OCI-LY7 (cell line): ENCODE measurements at regions of chr17 and their contacts with region 1.

Region 1: GRCh38 chr17:82917691-82918345 is 78.0 kb upstream of the ZNF750 start:
- DNase-seq: peak; percentile 66
- H3K4me3 ChIP-seq: no peak overlapping the region
- H3K27ac ChIP-seq: no peak overlapping the region
- H3K4me1 ChIP-seq: peaks cover 51% of the 10 kb centered on the region
- CTCF ChIP-seq: peak; percentile 94

Region 2: GRCh38 chr17:82781894-82782274 is 135.9 kb before region 1 on chr17:
- CTCF ChIA-PET with region 1: interaction called, 11 read pairs
- POLR2A ChIA-PET with region 1: interaction called, 5 read pairs
- intact Hi-C with region 1: loop called (anchors 1 kb)
- DNase-seq: peak; percentile 92
- H3K4me3 ChIP-seq: no peak overlapping the region
- H3K27ac ChIP-seq: peak overlapping the region; percentile 36
- H3K4me1 ChIP-seq: peaks cover 21% of the 10 kb centered on the region
- CTCF ChIP-seq: peak; percentile 100

Region 3: GRCh38 chr17:82863941-82864774 is 53.7 kb before region 1 on chr17:
- CTCF ChIA-PET with region 1: interaction called, 4 read pairs
- POLR2A ChIA-PET with region 1: interaction called, 3 read pairs
- intact Hi-C with region 1: loop called (anchors 1 kb)
- DNase-seq: peak; percentile 75
- H3K4me3 ChIP-seq: peak overlapping the region; percentile 7
- H3K27ac ChIP-seq: peak overlapping the region; percentile 52
- H3K4me1 ChIP-seq: peaks cover 93% of the 10 kb centered on the region
- CTCF ChIP-seq: no peak

Region 4: DNA sequence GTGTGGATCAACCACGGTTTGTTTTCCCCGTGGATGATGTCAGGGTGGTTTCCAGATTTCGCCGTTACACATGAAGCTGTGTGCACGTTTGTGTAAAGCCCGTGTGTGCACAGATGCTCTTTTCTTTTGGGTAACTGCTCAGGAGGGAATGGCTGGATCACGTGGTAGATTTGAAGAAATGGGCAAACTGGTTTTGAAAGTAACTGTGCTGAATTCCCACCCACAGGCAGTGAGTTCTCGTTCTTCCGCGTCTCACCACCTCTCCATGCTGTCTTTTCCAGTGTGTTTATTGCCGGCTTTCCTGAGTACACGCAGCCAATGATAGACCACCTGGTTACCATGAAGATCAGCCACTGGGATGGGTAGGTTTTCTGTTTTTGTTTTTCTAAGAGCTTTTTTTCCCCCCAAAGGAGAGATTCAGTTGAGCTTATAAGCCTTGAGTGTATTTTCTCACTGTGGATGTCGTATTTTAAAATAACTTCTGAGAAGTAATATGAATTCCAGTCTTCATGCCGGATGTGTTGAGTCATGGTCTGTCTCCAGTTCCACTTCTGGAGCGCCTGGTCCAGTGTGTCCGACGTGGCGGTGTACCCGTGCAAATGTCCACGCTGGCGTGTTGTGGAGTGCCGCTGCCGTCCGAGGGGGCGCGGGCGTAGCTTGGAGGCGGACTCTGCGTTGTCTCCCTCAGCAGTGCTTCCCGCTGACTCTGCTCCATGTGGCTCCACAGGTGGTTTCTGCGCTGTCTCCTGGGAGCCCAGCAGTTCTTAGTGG is 17.3 kb before region 1 on chr17:
- CTCF ChIA-PET with region 1: no interaction called
- POLR2A ChIA-PET with region 1: no interaction called
- intact Hi-C with region 1: no loop called
- DNase-seq: no peak
- H3K4me3 ChIP-seq: no peak overlapping the region
- H3K27ac ChIP-seq: no peak overlapping the region
- H3K4me1 ChIP-seq: no peaks in the 10 kb centered on the region
- CTCF ChIP-seq: no peak

Region 5: DNA sequence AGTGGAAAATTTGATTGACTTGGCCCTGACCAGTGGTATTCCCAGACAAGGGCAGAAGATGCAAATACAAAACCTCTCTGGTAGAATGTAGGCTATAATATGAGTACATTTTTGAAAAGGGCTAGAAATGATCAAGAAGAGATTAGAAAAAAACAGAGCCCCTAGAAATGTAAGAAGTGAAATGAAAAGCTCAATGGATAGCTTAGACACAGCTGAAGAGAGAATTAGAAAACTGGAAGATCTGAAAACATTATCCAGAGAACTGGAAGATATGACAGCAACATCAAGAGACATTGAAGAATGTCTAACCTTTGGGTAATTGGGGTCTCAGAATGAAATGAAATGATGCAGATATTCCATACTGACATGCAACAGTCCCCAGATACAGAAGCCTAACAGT is 27.2 kb after region 1 on chr17:
- CTCF ChIA-PET with region 1: no interaction called
- POLR2A ChIA-PET with region 1: no interaction called
- intact Hi-C with region 1: loop called (anchors 1 kb)
- DNase-seq: peak; percentile 37
- H3K4me3 ChIP-seq: no peak overlapping the region
- H3K27ac ChIP-seq: no peak overlapping the region
- H3K4me1 ChIP-seq: no peaks in the 10 kb centered on the region
- CTCF ChIP-seq: no peak

Region 6: DNA sequence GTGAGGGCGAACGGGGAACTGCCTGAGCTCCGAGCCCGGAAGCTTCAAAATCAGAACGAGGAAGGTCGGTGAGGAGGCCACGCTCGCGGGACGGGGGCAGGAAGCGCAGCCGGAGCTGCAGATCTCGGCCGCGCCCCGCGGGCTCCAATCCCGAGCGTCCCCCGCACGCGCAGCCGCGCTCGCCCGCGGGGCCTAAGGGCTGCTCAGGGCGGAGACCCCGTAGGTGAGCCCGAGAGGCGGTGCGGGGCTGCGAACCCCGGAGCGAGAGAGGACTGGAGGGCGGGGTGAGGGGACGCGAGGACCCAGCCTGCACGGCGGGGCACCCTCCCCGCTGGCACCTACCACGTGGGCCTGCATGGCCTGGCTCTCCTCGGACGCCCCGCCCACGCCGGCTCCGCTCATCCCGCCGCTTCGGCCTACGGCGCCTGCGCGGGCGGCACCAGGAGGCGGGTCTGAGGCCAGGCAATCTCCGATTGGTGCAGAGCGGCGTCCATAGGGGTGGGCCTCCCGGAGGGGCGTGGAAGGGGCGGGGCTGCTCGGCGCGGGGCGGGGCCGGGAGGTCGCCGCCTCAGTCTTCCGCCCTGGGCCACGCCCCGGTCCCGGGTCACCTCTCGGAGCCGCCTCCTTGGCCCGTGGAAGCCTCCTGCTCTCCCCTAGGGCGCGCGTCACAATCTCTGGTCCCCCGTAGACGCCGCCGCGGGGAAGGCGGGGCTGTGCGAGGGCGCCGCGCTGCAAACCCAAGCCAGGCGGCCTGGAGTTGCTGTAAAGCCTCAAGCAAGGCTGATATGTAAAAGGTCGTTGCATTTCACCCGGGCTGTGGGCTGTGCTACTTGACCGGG is 133.8 kb after region 1 on chr17:
- CTCF ChIA-PET with region 1: interaction called, 3 read pairs
- POLR2A ChIA-PET with region 1: no interaction called
- intact Hi-C with region 1: loop called (anchors 2 kb)
- DNase-seq: peak; percentile 99
- H3K4me3 ChIP-seq: peak overlapping the region; percentile 74
- H3K27ac ChIP-seq: peak overlapping the region; percentile 75
- H3K4me1 ChIP-seq: peaks cover 31% of the 10 kb centered on the region
- CTCF ChIP-seq: no peak

Region 7: GRCh38 chr17:83119987-83120864 is 202.4 kb after region 1 on chr17:
- CTCF ChIA-PET with region 1: interaction called, 3 read pairs
- POLR2A ChIA-PET with region 1: interaction called, 3 read pairs
- intact Hi-C with region 1: loop called (anchors 5 kb)
- DNase-seq: peak; percentile 98
- H3K4me3 ChIP-seq: peak overlapping the region; percentile 62
- H3K27ac ChIP-seq: peak overlapping the region; percentile 89
- H3K4me1 ChIP-seq: peaks cover 30% of the 10 kb centered on the region
- CTCF ChIP-seq: no peak